Panc1 (cell line): ENCODE measurements at regions of chr7 and their contacts with region 1.

Region 1: DNA sequence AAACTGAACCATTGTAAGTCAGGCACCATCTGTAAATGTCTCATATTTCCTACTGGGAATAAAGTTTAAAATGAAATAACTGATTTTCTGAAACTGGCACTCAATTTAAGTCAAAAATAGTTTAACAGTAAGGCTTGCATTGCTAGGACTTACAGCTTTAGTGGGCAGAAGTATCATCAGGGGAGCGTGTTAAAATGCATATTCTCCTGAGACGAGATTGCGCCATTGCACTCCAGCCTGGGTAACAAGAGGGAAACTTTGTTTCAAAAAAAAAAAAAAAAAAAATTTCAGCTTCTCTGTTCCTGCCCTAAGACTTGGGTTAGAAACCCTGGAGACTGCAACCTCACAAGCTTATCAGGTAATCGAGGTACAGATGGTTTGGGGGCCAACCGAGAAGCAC is 65.4 kb downstream of the UBE3C start:
- DNase-seq: no peak
- ATAC-seq: no peak
- H3K4me3 ChIP-seq: no peak overlapping the region
- H3K27ac ChIP-seq: no peak overlapping the region
- H3K4me1 ChIP-seq: no peaks in the 10 kb centered on the region
- H3K27me3 ChIP-seq: no peaks in the 10 kb centered on the region
- CTCF ChIP-seq: no peak

Region 2: GRCh38 chr7:156903232-156903909 is 300.8 kb before region 1 on chr7:
- CTCF ChIA-PET with region 1: no interaction called
- POLR2A ChIA-PET with region 1: interaction called, 17 read pairs
- in situ Hi-C with region 1: no loop called
- intact Hi-C with region 1: no loop called
- DNase-seq: no peak
- ATAC-seq: peak; percentile 55
- H3K4me3 ChIP-seq: no peak overlapping the region
- H3K27ac ChIP-seq: no peak overlapping the region
- H3K4me1 ChIP-seq: no peaks in the 10 kb centered on the region
- H3K27me3 ChIP-seq: no peaks in the 10 kb centered on the region
- CTCF ChIP-seq: no peak

Region 3: GRCh38 chr7:157153260-157153659 is 50.9 kb before region 1 on chr7:
- CTCF ChIA-PET with region 1: no interaction called
- POLR2A ChIA-PET with region 1: interaction called, 10 read pairs
- in situ Hi-C with region 1: no loop called
- intact Hi-C with region 1: no loop called
- DNase-seq: no peak
- ATAC-seq: no peak
- H3K4me3 ChIP-seq: no peak overlapping the region
- H3K27ac ChIP-seq: no peak overlapping the region
- H3K4me1 ChIP-seq: peaks cover 28% of the 10 kb centered on the region
- H3K27me3 ChIP-seq: no peaks in the 10 kb centered on the region
- CTCF ChIP-seq: no peak

Region 4: GRCh38 chr7:157177983-157178381 is 26.2 kb before region 1 on chr7:
- CTCF ChIA-PET with region 1: no interaction called
- POLR2A ChIA-PET with region 1: no interaction called
- in situ Hi-C with region 1: no loop called
- intact Hi-C with region 1: no loop called
- DNase-seq: no peak
- ATAC-seq: no peak
- H3K4me3 ChIP-seq: no peak overlapping the region
- H3K27ac ChIP-seq: no peak overlapping the region
- H3K4me1 ChIP-seq: no peaks in the 10 kb centered on the region
- H3K27me3 ChIP-seq: no peaks in the 10 kb centered on the region
- CTCF ChIP-seq: no peak

Region 5: DNA sequence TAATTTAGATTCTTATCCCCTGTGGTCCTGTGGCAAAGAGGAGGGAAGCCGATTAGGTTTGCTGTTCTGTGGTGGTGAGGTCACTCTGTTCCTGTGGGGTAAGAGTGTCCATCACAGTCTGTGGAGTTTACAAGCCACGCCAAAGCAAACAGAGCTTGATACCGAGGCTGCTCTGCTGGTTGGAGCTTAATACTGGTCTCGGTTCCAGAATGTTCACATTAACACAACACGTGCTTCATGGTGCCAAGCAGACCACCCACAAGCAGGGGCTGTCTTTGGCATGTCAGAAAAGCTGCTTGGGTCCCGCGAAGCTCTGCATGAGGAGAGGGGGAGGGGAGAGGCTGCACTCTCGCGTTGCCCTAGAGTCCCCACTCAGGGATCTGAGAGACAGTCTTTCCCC is 180.2 kb after region 1 on chr7:
- CTCF ChIA-PET with region 1: no interaction called
- POLR2A ChIA-PET with region 1: no interaction called
- in situ Hi-C with region 1: no loop called
- intact Hi-C with region 1: no loop called
- DNase-seq: no peak
- ATAC-seq: no peak
- H3K4me3 ChIP-seq: no peak overlapping the region
- H3K27ac ChIP-seq: no peak overlapping the region; the same call in 1 of the 2 replicates
- H3K4me1 ChIP-seq: peaks cover 15% of the 10 kb centered on the region
- H3K27me3 ChIP-seq: no peaks in the 10 kb centered on the region
- CTCF ChIP-seq: no peak

Region 6: DNA sequence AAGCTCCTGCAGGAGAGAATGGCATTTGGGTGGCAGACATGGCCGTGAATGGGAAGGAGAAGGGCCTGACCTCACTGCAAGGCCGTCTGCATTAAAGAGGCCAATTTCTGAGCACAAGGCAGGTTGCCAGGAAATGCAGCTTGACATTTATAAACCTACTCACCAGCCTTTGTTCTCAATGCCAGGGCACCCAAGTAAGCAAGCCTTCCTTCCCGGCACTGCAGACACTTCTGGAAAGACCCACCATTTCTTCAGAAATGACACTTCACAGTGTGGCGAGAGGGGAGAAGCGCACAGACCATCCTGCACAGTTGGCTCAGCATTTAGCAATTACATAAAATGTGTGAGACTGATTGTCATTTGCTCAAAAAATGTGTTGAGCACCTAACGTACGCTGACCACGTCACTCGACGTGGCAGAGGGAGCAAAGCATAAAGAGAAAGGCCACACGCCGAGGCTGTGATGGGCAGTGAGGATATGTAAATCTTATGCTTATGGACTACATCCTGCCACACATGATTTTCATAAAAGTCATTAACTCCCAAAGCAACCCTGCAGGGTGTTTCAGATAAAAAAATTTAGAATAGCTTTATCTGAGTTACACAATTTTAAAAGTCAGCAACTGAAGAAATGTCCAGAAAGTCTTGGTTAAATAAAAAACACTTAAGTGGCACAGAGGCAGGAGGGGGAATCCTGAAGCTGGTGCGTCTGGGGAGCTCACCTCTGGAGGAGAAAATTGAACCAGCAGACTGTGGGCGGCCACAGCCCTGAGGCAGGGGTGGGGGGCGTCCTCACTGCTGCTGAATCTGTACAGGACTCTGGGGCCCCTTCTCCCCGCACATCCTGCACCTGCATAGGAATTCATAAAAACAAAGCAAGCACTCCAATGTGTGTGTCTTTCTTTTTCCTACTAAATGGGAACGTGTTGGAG is 839.7 kb after region 1 on chr7:
- CTCF ChIA-PET with region 1: no interaction called
- POLR2A ChIA-PET with region 1: no interaction called
- in situ Hi-C with region 1: no loop called
- intact Hi-C with region 1: no loop called
- DNase-seq: no peak
- ATAC-seq: no peak
- H3K4me3 ChIP-seq: no peak overlapping the region
- H3K27ac ChIP-seq: no peak overlapping the region
- H3K4me1 ChIP-seq: no peaks in the 10 kb centered on the region
- H3K27me3 ChIP-seq: peaks cover 5% of the 10 kb centered on the region; the same call in 1 of the 2 replicates
- CTCF ChIP-seq: no peak